ENCODE measurements at regions of chr5 and their contacts with region 1.

Region 1: GRCh38 chr5:139787568-139788293 is 7.9 kb upstream of the PSD2 start:
- DNase-seq: peak; percentile 89
- H3K4me3 ChIP-seq: peak overlapping the region; percentile 21 to 51 (median 36)
- H3K27ac ChIP-seq: peak overlapping the region in 3 of 4 donors; percentile 23 to 50 (median 37)
- H3K4me1 ChIP-seq: peaks cover 0 to 14% (median 5%) of the 10 kb centered on the region in 4 donors
- H3K27me3 ChIP-seq: peaks cover 8% of the 10 kb centered on the region
- CTCF ChIP-seq: peak; percentile 90 to 98 (median 95)
- EP300 ChIP-seq: no peak
- POLR2A ChIP-seq: no peak

Region 2: DNA sequence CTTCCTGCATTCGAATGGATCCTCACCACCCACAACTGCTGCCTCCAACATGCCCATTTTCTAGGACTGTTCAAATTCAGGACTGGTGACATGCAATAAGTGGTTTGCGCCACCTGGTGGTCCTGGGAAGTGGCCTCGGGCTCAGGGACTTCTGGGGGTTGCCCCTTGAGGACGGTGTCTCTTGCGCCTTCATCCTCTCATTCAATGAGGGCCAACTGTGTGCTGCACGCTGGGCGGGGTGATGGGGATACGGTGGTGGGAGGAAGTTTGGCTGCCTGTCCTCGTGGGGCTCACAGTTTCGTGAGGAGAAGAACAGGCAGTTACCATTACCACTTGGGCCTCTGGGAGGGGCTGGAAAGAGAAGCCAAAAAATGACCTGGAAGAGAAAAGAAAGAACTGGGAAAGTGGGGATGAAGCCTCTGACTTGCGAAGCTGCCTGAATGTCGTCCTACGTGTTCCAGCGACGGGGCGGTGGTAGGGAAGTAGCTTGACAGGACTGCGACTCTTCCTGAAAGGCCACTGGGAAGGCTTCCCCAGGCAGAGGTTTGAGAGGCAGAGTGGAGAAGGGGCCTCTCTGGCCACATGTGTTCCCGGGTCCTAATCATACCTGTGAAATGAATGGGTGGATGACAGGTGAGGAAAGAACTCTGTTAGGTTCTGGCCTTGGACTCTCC is 56.9 kb after region 1 on chr5:
- in situ Hi-C with region 1: loop called in 1 of 4 experiments (anchors 5 kb)
- intact Hi-C with region 1: no loop called
- DNase-seq: peak; percentile 74
- H3K4me3 ChIP-seq: no peak overlapping the region
- H3K27ac ChIP-seq: no peak overlapping the region
- H3K4me1 ChIP-seq: peaks cover 4 to 10% (median 8%) of the 10 kb centered on the region in 4 donors
- H3K27me3 ChIP-seq: peaks cover 43% of the 10 kb centered on the region
- CTCF ChIP-seq: peak; percentile 52 to 59 (median 58)
- EP300 ChIP-seq: no peak
- POLR2A ChIP-seq: no peak

Region 3: DNA sequence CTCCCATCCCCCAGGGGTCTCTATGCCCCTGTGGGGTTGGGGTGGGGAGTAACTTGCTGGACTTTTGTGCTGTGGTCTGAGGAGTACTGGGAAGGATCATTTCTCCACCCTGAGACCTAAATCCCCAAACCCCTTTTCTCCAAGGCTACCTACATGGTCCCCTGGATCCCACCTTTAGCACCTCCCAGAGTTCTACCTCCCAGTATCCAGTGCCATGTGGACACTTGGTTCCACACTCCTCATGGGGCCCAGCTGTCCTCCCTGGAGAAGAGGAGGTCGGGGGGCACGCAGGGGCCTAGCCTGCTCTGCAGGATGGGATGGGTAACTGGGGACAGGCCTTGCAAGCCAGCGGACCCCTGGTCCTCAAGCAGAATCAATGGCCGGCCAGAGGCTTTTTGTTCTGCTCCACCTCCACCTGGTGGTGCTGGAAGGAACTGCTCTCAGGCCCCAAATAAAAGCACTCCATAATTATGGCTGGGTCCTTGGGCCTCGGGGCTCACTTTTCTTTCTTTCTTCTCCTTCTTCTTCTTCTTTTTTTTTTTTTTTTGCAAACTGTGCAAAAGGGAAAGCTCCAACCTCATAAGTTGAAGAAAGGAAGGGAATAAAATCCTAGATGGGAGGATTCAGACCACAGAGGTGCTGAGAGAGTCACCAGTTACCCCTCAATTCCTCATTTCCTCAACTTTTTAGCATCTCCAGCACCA is 76.3 kb after region 1 on chr5:
- in situ Hi-C with region 1: loop called in 1 of 4 experiments (anchors 10 kb)
- intact Hi-C with region 1: loop called (anchors 5 kb)
- DNase-seq: peak; percentile 67
- H3K4me3 ChIP-seq: no peak overlapping the region
- H3K27ac ChIP-seq: no peak overlapping the region
- H3K4me1 ChIP-seq: peaks cover 0 to 13% (median 2%) of the 10 kb centered on the region in 4 donors
- H3K27me3 ChIP-seq: no peaks in the 10 kb centered on the region
- CTCF ChIP-seq: peak; percentile 81 to 92 (median 90)
- EP300 ChIP-seq: no peak
- POLR2A ChIP-seq: no peak

Region 4: GRCh38 chr5:139895647-139896046 is 107.9 kb after region 1 on chr5:
- in situ Hi-C with region 1: no loop called
- intact Hi-C with region 1: no loop called
- DNase-seq: no peak
- H3K4me3 ChIP-seq: no peak overlapping the region
- H3K27ac ChIP-seq: no peak overlapping the region
- H3K4me1 ChIP-seq: peaks cover 0 to 11% (median 0%) of the 10 kb centered on the region in 4 donors
- H3K27me3 ChIP-seq: peaks cover 2% of the 10 kb centered on the region
- CTCF ChIP-seq: no peak
- EP300 ChIP-seq: no peak
- POLR2A ChIP-seq: no peak

Region 5: GRCh38 chr5:139968547-139969261 is 181.0 kb after region 1 on chr5:
- in situ Hi-C with region 1: loop called (anchors 5 to 10 kb)
- intact Hi-C with region 1: loop called (anchors 5 kb)
- DNase-seq: peak; percentile 90
- H3K4me3 ChIP-seq: no peak overlapping the region
- H3K27ac ChIP-seq: no peak overlapping the region
- H3K4me1 ChIP-seq: peaks cover 0 to 7% (median 1%) of the 10 kb centered on the region in 4 donors
- H3K27me3 ChIP-seq: no peaks in the 10 kb centered on the region
- CTCF ChIP-seq: peak; percentile 98 to 99 (median 99)
- EP300 ChIP-seq: no peak
- POLR2A ChIP-seq: no peak

Region 6: GRCh38 chr5:139974661-139975060 is 186.9 kb after region 1 on chr5:
- in situ Hi-C with region 1: loop called (anchors 5 to 10 kb)
- intact Hi-C with region 1: loop called (anchors 5 kb)
- DNase-seq: no peak
- H3K4me3 ChIP-seq: no peak overlapping the region
- H3K27ac ChIP-seq: no peak overlapping the region
- H3K4me1 ChIP-seq: no peaks in the 10 kb centered on the region
- H3K27me3 ChIP-seq: no peaks in the 10 kb centered on the region
- CTCF ChIP-seq: no peak
- EP300 ChIP-seq: no peak
- POLR2A ChIP-seq: no peak

Region 7: DNA sequence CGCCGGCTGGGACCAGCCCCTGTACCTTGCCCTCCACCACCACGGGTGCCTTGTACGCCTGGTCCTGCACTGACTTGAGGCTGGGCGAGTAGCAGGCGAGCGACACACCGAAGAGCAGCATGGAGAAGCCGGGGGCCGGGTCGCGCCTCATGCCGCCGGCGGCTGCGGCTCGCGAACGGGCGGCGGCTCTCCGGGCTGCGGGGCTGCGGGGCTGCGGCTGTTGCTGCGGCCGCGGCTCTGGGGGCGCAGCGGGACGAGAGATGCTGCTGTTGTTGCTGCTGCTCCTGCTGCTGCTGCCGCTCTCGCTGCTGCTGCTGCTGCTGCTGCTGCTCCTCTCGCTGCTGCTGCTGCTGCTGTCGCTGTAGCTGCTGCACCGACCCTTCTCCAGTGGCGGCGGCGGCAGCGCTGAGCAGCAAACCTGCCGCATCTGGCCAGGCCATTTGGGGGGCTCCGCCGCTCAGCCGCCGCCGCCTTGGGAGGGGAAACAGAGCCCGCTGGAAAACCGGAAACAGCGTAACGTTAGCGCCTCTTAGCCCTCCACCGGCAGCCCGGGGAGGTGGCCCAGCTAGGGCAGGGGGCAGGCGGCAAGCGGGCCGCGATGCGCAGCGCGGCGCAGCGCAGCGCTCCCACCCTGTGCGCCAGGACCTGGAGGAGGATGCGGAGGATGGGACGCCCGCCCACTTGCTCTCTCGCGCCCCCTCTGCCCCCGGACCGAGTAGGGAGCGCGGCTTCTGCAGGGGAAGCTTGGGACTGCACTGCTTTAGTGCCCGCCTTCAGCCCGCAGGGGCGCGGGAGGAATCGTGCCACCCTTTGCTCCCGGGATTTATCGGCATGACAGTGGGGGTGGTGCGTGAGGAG is 255.1 kb after region 1 on chr5 and contains the start of gene NRG2:
- in situ Hi-C with region 1: no loop called
- intact Hi-C with region 1: no loop called
- DNase-seq: peak; percentile 63
- H3K4me3 ChIP-seq: peak within 1 kb of the TSS; percentile 36 to 66 (median 58)
- H3K27ac ChIP-seq: peak within 1 kb of the TSS; percentile 33 to 85 (median 70)
- H3K4me1 ChIP-seq: peaks cover 5 to 40% (median 29%) of the 10 kb centered on the region in 4 donors
- H3K27me3 ChIP-seq: peaks cover 83% of the 10 kb centered on the region
- CTCF ChIP-seq: peak; percentile 33 to 58 (median 42)
- EP300 ChIP-seq: no peak
- POLR2A ChIP-seq: no peak
- total RNA-seq, gene NRG2: 0.68 to 12.3 (median 0.95) TPM in 3 of 4 donors, not detected in the other

Region 8: GRCh38 chr5:140157032-140157803 is 369.5 kb after region 1 on chr5:
- in situ Hi-C with region 1: loop called in 3 of 4 experiments (anchors 25 kb)
- intact Hi-C with region 1: loop called (anchors 10 kb)
- DNase-seq: peak; percentile 92
- H3K4me3 ChIP-seq: peak overlapping the region in 3 of 4 donors; percentile 19 to 33 (median 28)
- H3K27ac ChIP-seq: peak overlapping the region in 3 of 4 donors; percentile 11 to 17 (median 15)
- H3K4me1 ChIP-seq: peaks cover 3 to 15% (median 9%) of the 10 kb centered on the region in 4 donors
- H3K27me3 ChIP-seq: no peaks in the 10 kb centered on the region
- CTCF ChIP-seq: peak; percentile 87 to 93 (median 90)
- EP300 ChIP-seq: no peak
- POLR2A ChIP-seq: no peak